Left colon (tissue), 2 donors: ENCODE measurements at regions of chr19 and their contacts with region 1.

Region 1: GRCh38 chr19:49637821-49638738 is 1.9 kb downstream of the RRAS start:
- DNase-seq: peak; percentile 87 to 95
- ATAC-seq: peak; percentile 44

Region 2: GRCh38 chr19:49590071-49590970 is 47.8 kb before region 1 on chr19:
- intact Hi-C with region 1: loop called in 1 of 2 experiments (anchors 5 kb)
- DNase-seq: peak; percentile 98 to 99
- ATAC-seq: peak; percentile 78